A549 (cell line): ENCODE measurements at regions of chr17 and their contacts with region 1.

Region 1: DNA sequence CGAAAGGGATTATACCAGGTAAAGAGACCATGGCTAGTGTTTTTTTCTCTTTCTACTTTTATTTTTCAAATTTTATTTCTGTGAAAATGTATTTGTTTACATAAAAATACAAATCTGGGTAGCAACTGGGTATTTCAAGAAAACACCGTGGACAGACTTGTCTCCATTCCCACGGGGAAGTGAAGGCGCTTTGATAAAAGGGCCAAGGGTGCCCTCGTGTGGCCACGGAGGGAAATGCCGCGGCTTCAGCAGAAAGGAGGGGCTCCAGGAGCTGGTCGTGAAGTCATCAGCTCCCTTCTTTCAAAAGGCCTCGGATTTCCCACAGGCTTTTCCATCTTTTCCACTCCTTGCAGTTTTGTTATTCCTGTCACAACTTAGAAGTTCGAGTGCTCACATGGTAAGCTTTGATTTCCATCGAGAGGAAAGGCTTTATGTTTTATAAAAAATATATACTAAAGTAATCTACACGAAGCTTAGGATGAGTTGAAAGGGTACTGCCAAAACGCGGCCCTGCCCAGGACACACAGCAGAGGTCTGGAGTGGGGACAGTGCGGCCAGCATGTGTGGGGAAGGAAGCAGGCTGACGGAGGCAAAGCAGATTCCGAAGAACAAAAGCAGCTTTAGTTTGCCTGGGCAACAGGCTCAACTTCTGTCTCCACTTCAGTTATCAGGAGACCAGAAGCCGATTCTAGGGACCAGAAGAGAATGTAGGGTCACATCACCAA is 15.3 kb upstream of the MNT start:
- DNase-seq: peak; percentile 84 to 88
- ATAC-seq: peak; percentile 76 to 85
- H3K4me3 ChIP-seq: no peak overlapping the region
- H3K27ac ChIP-seq: no peak overlapping the region
- H3K4me1 ChIP-seq: peaks cover 7% of the 10 kb centered on the region; the same call in 1 of the 3 replicates
- CTCF ChIP-seq: peak; percentile 98
- EP300 ChIP-seq: no peak
- POLR2A ChIP-seq: no peak
- RAD21 ChIP-seq: peak; percentile 95 to 96

Region 2: GRCh38 chr17:2275722-2276121 is 140.4 kb before region 1 on chr17:
- CTCF ChIA-PET with region 1: no interaction called
- POLR2A ChIA-PET with region 1: no interaction called
- DNase-seq: no peak
- ATAC-seq: no peak
- H3K4me3 ChIP-seq: no peak overlapping the region
- H3K27ac ChIP-seq: no peak overlapping the region
- H3K4me1 ChIP-seq: no peaks in the 10 kb centered on the region
- CTCF ChIP-seq: no peak
- EP300 ChIP-seq: no peak
- POLR2A ChIP-seq: no peak
- RAD21 ChIP-seq: no peak

Region 3: DNA sequence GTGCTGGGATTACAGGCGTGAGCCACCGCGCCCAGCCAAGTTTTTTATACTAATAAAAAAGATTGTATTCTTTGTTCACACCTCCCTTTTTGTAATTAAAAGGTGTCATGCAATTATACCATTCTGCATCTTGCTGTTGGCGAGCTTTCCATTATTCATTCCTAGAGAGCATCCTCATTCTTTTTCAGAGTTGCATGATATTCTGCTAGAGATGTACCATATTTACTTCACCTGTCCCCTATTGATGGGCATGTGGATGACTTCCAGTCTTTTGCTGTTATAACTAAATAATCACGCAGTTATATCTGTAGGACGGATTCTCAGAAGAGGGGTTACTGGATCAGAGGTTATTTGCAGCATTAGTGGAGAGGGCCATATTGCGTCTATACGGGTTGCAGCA is 61.9 kb before region 1 on chr17:
- CTCF ChIA-PET with region 1: interaction called, 25 read pairs
- POLR2A ChIA-PET with region 1: interaction called, 7 read pairs
- DNase-seq: no peak
- ATAC-seq: no peak
- H3K4me3 ChIP-seq: no peak overlapping the region
- H3K27ac ChIP-seq: no peak overlapping the region
- H3K4me1 ChIP-seq: peaks cover 15% of the 10 kb centered on the region
- CTCF ChIP-seq: no peak
- EP300 ChIP-seq: no peak
- POLR2A ChIP-seq: no peak
- RAD21 ChIP-seq: no peak

Region 4: DNA sequence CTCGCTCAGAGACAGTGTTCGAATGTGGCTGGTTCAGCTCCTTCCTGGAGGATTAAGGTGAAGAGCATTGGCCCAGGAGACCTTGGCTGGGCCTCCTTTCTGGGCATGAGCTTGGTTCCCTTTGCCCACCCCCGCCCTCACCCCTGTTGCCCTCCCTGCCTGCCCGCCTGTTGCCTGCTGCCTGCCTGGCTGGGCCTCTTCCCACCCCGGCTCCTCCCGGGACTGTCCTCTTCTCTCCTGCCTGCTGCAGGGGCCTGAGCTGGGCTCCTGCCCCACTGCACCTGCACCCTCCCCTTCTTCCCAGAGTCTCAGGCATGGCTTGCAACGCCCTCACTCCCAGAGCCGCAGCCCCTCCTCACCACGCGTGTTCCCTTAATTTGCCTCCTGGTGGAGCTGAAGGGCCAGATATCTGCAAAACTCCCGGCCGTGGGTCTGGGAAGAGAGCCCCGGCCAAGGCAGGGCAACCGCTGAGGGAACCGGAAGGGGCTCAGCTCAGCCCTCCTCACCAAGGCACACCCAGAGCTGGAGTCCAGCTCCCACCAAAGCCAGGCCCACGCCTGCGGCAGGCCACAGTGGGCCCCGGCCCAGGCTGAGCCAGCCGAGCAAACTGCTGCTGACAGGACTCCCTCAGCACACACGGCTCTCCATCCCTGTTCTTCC is 46.5 kb before region 1 on chr17:
- CTCF ChIA-PET with region 1: interaction called, 1,099 read pairs
- POLR2A ChIA-PET with region 1: no interaction called
- DNase-seq: no peak
- ATAC-seq: peak; percentile 9 to 41; a peak in 3 of 6 replicates
- H3K4me3 ChIP-seq: no peak overlapping the region
- H3K27ac ChIP-seq: no peak overlapping the region
- H3K4me1 ChIP-seq: no peaks in the 10 kb centered on the region
- CTCF ChIP-seq: no peak
- EP300 ChIP-seq: no peak
- POLR2A ChIP-seq: no peak
- RAD21 ChIP-seq: peak in 1 of 2 experiments; percentile 38; a peak in 1 of 5 replicates

Region 5: DNA sequence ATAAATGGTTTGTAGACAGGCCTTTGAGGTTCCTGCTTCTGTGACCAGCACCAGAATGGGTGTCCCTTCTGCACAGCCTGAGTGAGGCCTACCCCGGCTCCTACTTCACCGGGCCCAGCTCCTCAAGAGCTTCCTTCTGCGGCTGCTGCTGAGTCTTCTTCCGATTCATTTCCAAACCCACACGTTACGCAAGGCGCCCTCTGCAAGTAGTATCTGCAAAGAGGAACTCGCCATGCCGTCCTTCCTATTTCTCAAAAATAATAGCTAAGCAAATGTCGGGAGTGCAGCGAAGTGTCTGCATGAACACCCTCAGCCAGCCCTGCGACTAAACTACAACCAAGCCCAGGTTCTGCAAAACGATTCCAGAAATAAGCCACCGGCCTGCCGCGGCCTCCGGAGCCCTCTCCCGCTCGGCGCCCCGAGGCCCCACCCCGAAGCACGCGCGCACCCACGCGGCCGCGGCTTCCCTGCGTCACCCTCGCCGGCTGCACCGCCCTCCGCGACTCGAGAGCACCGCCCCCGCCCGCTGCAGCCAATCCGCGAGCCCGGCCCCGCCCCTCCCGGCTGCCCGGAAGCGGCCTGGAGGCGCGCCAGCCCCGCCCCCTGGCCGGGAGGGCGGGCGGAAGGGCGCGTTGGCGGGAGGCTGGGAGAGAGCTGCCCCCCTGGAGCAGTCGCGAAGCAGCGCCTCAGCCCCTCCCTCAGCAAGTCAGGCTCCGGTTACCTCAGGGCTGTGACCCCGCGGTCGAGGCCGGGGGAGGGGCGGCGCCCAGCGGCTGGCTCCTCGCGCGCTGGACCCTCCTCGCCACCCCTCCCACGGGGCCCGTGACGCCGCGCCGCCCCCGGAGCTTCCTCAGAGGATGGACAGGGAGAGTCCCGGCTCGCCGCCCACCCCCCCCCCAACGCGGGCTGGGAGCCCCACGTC is 23.7 kb before region 1 on chr17:
- CTCF ChIA-PET with region 1: interaction called, 1,099 read pairs
- POLR2A ChIA-PET with region 1: interaction called, 20 read pairs
- DNase-seq: peak; percentile 93 to 98
- ATAC-seq: peak; percentile 30 to 55
- H3K4me3 ChIP-seq: peak overlapping the region; percentile 66
- H3K27ac ChIP-seq: peak overlapping the region; percentile 97 to 99
- H3K4me1 ChIP-seq: peaks cover 43% of the 10 kb centered on the region
- CTCF ChIP-seq: no peak
- EP300 ChIP-seq: peak in 1 of 2 experiments; percentile 70; a peak in 2 of 5 replicates
- POLR2A ChIP-seq: peak; percentile 38
- RAD21 ChIP-seq: peak in 1 of 2 experiments; percentile 16; a peak in 1 of 5 replicates

Region 6: DNA sequence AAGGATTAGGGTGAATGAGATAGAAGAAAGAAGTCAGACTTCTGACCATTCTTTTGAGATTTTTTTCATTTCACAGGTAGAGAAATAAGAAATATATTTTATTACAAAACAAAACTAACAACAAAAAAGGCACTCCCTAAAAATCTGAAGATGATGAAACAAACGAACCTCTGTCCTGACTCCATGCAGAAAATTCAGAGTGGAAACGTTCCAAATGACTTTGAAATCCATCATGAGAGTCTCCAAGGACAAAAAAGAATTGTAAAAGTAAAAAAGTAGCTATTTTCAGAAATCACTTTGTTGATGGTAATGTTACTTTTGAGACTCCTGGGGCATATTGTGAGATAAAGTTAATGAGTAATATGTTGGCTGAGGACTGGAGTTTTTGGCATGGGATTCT is 11.0 kb after region 1 on chr17:
- CTCF ChIA-PET with region 1: interaction called, 98 read pairs
- POLR2A ChIA-PET with region 1: no interaction called
- DNase-seq: no peak
- ATAC-seq: no peak
- H3K4me3 ChIP-seq: no peak overlapping the region
- H3K27ac ChIP-seq: no peak overlapping the region
- H3K4me1 ChIP-seq: no peaks in the 10 kb centered on the region
- CTCF ChIP-seq: no peak
- EP300 ChIP-seq: no peak
- POLR2A ChIP-seq: no peak
- RAD21 ChIP-seq: no peak

Region 7: GRCh38 chr17:2459917-2460271 is 43.7 kb after region 1 on chr17:
- CTCF ChIA-PET with region 1: interaction called, 11 read pairs
- POLR2A ChIA-PET with region 1: no interaction called
- DNase-seq: no peak
- ATAC-seq: no peak
- H3K4me3 ChIP-seq: no peak overlapping the region
- H3K27ac ChIP-seq: peak overlapping the region in 1 of 2 experiments; percentile 61; a peak in 3 of 6 replicates
- H3K4me1 ChIP-seq: peaks cover 18% of the 10 kb centered on the region
- CTCF ChIP-seq: no peak
- EP300 ChIP-seq: no peak
- POLR2A ChIP-seq: no peak
- RAD21 ChIP-seq: no peak

Region 8: GRCh38 chr17:3049705-3050295 is 633.6 kb after region 1 on chr17:
- CTCF ChIA-PET with region 1: no interaction called
- POLR2A ChIA-PET with region 1: no interaction called
- DNase-seq: no peak
- ATAC-seq: no peak
- H3K4me3 ChIP-seq: peak overlapping the region; percentile 58
- H3K27ac ChIP-seq: no peak overlapping the region
- H3K4me1 ChIP-seq: peaks cover 8% of the 10 kb centered on the region; the same call in 1 of the 3 replicates
- CTCF ChIP-seq: no peak
- EP300 ChIP-seq: no peak
- POLR2A ChIP-seq: no peak
- RAD21 ChIP-seq: no peak